CD4-positive, alpha-beta memory T cell (primary cell): ENCODE measurements at regions of chr19 and their contacts with region 1.

Region 1: GRCh38 chr19:47157431-47158321 is 27.0 kb downstream of the SAE1 start:
- DNase-seq: peak; percentile 45 to 56 (median 53)
- H3K4me3 ChIP-seq: peak overlapping the region; percentile 17 to 40
- H3K4me3 Mint-ChIP-seq: peak overlapping the region; percentile 62 to 90 (median 84)
- H3K27ac ChIP-seq: peak overlapping the region; percentile 43
- H3K27ac Mint-ChIP-seq: peak overlapping the region; percentile 76 to 98 (median 95)
- H3K4me1 ChIP-seq: peaks cover 75% of the 10 kb centered on the region
- H3K4me1 Mint-ChIP-seq: peaks cover 40 to 74% (median 60%) of the 10 kb centered on the region in 4 donors
- H3K27me3 ChIP-seq: no peaks in the 10 kb centered on the region
- H3K27me3 Mint-ChIP-seq: no peaks in the 10 kb centered on the region

Region 2: GRCh38 chr19:47028195-47028601 is 129.5 kb before region 1 on chr19:
- CTCF ChIA-PET with region 1: no interaction called
- POLR2A ChIA-PET with region 1: no interaction called
- intact Hi-C with region 1: no loop called
- DNase-seq: no peak
- H3K4me3 ChIP-seq: no peak overlapping the region
- H3K4me3 Mint-ChIP-seq: no peak overlapping the region
- H3K27ac ChIP-seq: no peak overlapping the region
- H3K27ac Mint-ChIP-seq: no peak overlapping the region
- H3K4me1 ChIP-seq: peaks cover 11% of the 10 kb centered on the region
- H3K4me1 Mint-ChIP-seq: peaks cover 2 to 12% (median 6%) of the 10 kb centered on the region in 4 donors
- H3K27me3 ChIP-seq: peaks cover 20% of the 10 kb centered on the region
- H3K27me3 Mint-ChIP-seq: peaks cover 41 to 46% of the 10 kb centered on the region in 2 donors

Region 3: GRCh38 chr19:47039239-47039874 is 118.3 kb before region 1 on chr19:
- CTCF ChIA-PET with region 1: no interaction called
- POLR2A ChIA-PET with region 1: no interaction called
- intact Hi-C with region 1: no loop called
- DNase-seq: no peak
- H3K4me3 ChIP-seq: no peak overlapping the region
- H3K4me3 Mint-ChIP-seq: peak overlapping the region in 1 of 8 donors; percentile 27
- H3K27ac ChIP-seq: no peak overlapping the region
- H3K27ac Mint-ChIP-seq: peak overlapping the region in 1 of 7 donors; percentile 14
- H3K4me1 ChIP-seq: peaks cover 16% of the 10 kb centered on the region
- H3K4me1 Mint-ChIP-seq: peaks cover 10 to 24% (median 16%) of the 10 kb centered on the region in 4 donors
- H3K27me3 ChIP-seq: no peaks in the 10 kb centered on the region
- H3K27me3 Mint-ChIP-seq: peaks cover 0 to 7% of the 10 kb centered on the region in 2 donors

Region 4: DNA sequence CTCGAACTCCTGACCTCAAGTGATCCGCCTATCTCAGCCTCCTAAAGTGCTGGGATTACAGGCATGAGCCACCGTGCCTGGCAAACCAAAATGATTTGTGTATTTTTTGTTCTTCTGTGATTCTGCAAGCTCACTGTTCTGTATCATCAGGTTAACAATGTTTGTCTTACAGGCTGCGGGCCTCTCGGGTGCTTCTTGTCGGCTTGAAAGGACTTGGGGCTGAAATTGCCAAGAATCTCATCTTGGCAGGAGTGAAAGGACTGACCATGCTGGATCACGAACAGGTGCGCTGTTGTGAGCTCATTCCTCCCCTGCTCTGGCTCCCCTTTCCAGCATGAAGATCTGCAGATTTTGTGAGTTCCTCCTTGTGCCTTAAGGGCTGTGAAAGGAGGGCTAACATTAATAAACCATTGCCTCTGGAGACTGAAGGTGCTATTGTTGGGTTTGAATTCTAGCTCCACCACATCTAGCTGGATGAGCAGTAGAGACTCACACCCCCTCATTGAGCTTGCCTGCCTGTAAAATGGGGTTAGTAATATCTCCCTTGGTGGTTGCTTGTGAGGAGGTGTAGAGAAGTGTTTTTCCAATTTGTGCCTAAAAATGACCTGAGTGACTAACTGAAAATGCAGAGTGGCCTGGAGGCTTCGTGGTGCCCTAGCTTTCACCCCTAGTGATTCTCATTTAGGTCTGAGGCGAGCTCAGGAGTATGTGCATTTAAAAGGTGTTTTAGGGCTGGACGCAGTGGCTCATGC is 14.2 kb before region 1 on chr19:
- CTCF ChIA-PET with region 1: interaction called, 34 read pairs
- POLR2A ChIA-PET with region 1: interaction called, 29 read pairs
- intact Hi-C with region 1: no loop called
- DNase-seq: no peak
- H3K4me3 ChIP-seq: no peak overlapping the region
- H3K4me3 Mint-ChIP-seq: no peak overlapping the region
- H3K27ac ChIP-seq: no peak overlapping the region
- H3K27ac Mint-ChIP-seq: peak overlapping the region; percentile 30 to 87 (median 41)
- H3K4me1 ChIP-seq: peaks cover 37% of the 10 kb centered on the region
- H3K4me1 Mint-ChIP-seq: peaks cover 34 to 68% (median 48%) of the 10 kb centered on the region in 4 donors
- H3K27me3 ChIP-seq: no peaks in the 10 kb centered on the region
- H3K27me3 Mint-ChIP-seq: no peaks in the 10 kb centered on the region

Region 5: GRCh38 chr19:47168065-47168464 is 10.4 kb after region 1 on chr19:
- CTCF ChIA-PET with region 1: interaction called, 12 read pairs
- POLR2A ChIA-PET with region 1: interaction called, 8 read pairs
- intact Hi-C with region 1: no loop called
- DNase-seq: no peak
- H3K4me3 ChIP-seq: no peak overlapping the region
- H3K4me3 Mint-ChIP-seq: no peak overlapping the region
- H3K27ac ChIP-seq: no peak overlapping the region
- H3K27ac Mint-ChIP-seq: peak overlapping the region in 1 of 7 donors; percentile 37
- H3K4me1 ChIP-seq: no peaks in the 10 kb centered on the region
- H3K4me1 Mint-ChIP-seq: peaks cover 8 to 25% (median 20%) of the 10 kb centered on the region in 4 donors
- H3K27me3 ChIP-seq: no peaks in the 10 kb centered on the region
- H3K27me3 Mint-ChIP-seq: no peaks in the 10 kb centered on the region

Region 6: GRCh38 chr19:47176627-47177090 is 19.0 kb after region 1 on chr19:
- CTCF ChIA-PET with region 1: interaction called, 48 read pairs
- POLR2A ChIA-PET with region 1: interaction called, 41 read pairs
- intact Hi-C with region 1: loop called (anchors 1 kb)
- DNase-seq: peak; percentile 65 to 79 (median 70)
- H3K4me3 ChIP-seq: peak overlapping the region in 1 of 2 donors; percentile 26
- H3K4me3 Mint-ChIP-seq: peak overlapping the region; percentile 67 to 92 (median 78)
- H3K27ac ChIP-seq: peak overlapping the region; percentile 39
- H3K27ac Mint-ChIP-seq: peak overlapping the region; percentile 88 to 96 (median 91)
- H3K4me1 ChIP-seq: peaks cover 55% of the 10 kb centered on the region
- H3K4me1 Mint-ChIP-seq: peaks cover 42 to 75% (median 54%) of the 10 kb centered on the region in 4 donors
- H3K27me3 ChIP-seq: no peaks in the 10 kb centered on the region
- H3K27me3 Mint-ChIP-seq: no peaks in the 10 kb centered on the region

Region 7: DNA sequence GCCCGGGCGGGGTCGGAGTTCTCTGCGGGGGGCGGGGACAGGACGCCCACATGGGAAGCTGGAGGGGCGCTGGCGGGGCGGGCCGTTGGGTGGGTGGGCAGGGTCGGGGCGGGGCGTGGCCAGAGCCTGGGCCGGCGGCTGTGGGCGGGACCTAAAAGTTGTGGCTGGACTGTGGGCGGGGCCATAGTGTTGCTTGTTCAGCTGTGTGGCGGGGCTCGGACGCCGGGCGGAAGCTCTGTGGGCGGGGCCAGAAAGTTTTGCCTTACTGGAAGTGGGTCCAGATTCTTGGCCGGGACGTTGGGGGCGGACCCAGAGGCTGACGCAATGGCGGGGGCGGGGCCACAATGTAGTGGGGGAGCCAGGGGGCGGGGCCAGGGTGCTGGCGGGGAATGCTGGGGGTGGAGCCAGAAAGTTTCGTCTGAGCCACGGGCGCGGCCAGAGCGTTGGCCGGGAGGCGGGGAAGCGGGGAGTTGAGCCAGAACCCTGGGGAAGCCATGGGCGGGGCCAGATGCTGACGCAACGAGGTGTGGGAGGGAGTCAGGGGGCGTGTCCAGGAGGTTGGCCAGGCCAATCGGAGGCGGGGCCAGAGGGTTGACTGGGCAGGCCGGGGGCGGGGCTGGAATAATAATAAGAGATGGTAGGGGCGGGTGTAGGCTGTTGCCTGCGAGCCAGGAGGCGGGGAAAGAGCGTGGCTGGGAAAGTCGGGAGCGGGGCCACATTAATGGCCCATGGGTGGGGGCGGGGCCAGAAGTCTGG is 99.2 kb after region 1 on chr19:
- CTCF ChIA-PET with region 1: interaction called, 609 read pairs
- POLR2A ChIA-PET with region 1: interaction called, 22 read pairs
- intact Hi-C with region 1: no loop called
- DNase-seq: peak; percentile 97 to 99 (median 98)
- H3K4me3 ChIP-seq: peak overlapping the region; percentile 61 to 62
- H3K4me3 Mint-ChIP-seq: peak overlapping the region; percentile 88 to 98 (median 94)
- H3K27ac ChIP-seq: peak overlapping the region; percentile 76
- H3K27ac Mint-ChIP-seq: peak overlapping the region; percentile 94 to 99 (median 99)
- H3K4me1 ChIP-seq: peaks cover 18% of the 10 kb centered on the region
- H3K4me1 Mint-ChIP-seq: peaks cover 20 to 44% (median 31%) of the 10 kb centered on the region in 4 donors
- H3K27me3 ChIP-seq: no peaks in the 10 kb centered on the region
- H3K27me3 Mint-ChIP-seq: no peaks in the 10 kb centered on the region